ENCODE measurements at regions of chr3 and their contacts with region 1.

Region 1: DNA sequence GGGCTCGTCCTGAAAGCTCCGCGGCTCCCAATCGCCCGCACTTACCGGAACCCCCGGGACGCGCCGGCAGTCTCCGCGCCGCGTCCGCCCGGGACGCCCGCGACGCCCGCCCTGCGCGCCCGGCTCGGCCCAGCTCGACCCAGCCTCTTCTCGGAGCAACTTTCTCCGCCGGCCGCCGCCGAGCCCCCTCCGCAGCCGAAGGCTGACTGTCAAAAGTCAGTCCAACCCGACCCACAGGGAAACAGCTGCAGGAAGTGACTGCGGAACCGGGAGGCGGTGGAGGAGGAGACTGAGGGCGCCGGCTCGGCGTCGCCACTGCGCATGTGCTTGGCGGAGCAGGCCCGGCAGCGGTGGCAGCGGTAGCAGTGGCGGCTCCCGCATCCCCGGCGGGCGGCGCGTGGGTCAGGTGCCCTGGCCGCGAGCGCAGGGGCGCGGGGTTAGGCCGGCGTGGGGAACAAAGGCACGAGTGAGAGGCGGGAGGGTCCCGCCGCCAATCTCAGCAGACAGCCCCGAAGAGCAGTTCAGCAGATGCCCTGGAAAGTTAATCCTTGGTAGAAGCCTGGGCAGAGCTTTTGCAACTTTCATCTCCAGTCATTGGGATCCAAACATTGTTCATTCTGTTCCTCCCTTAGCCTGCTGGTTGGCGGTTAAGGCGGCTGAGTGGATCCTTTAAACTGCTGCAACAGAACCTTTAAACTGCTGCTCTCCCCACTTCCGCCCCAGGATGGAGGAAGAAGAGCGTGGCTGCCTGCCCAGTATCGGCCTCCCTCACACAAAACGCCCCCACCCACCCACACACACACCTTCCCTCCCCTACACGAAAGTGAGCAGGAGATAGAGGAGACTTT is at the start of gene ZMAT3:
- DNase-seq: no peak
- H3K4me3 ChIP-seq: peak within 1 kb of the TSS; percentile 92
- CTCF ChIP-seq: no peak

Region 2: DNA sequence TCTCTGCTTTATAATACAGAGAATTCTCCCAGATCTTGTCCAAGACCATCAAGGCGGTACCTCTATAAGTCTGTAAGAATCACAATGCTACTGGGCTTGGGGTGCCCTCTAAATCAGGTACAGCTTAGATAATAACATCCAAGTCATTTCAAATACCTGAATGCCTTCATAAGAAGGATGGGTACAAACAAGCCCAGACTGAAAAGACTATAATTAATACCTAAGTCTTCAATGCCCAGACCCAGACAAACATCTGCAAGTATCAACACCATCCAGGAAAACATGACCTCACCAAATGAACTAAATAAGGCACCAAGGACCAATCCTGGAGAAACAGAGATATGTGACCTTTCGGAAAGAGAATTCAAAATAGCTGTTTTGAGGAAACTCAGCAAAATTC is 66.1 kb before region 1 on chr3:
- CTCF ChIA-PET with region 1: no interaction called
- POLR2A ChIA-PET with region 1: no interaction called
- DNase-seq: no peak
- H3K4me3 ChIP-seq: no peak overlapping the region
- CTCF ChIP-seq: no peak

Region 3: GRCh38 chr3:179046497-179047353 is 25.0 kb before region 1 on chr3:
- CTCF ChIA-PET with region 1: interaction called, 18 read pairs
- POLR2A ChIA-PET with region 1: no interaction called
- DNase-seq: no peak
- H3K4me3 ChIP-seq: no peak overlapping the region
- CTCF ChIP-seq: no peak

Region 4: DNA sequence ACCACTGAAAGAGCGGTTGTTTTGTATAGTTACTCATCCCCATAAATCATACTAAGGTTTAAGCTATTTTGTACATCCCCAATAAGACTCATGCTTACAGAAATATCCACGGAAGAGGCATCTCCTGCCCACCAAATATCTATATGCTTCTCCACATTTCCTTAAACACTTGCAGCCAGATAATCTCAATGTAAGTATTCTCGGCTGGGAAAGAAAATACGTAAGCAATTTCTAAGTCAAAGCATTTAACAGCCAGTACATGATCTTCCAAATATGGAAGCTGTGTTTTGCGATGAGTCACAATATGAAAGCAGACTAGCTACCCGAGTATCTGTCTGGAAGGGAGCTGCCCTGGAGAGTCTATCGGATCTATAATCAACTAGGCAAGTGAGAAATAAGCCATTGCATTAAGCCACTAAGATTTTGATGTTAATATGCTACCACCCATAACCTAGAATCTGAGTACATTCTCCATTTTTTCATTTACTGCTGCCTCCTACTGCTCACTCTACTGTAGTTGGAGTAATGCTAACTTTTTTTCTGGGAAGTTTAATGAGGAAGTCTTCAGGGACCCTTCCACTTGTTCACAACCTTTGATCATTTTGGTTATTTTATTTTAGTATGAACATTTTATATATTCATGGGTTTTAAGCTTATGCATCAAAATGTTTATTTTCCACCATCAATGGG is 26.8 kb after region 1 on chr3:
- CTCF ChIA-PET with region 1: interaction called, 19 read pairs
- POLR2A ChIA-PET with region 1: interaction called, 5 read pairs
- DNase-seq: no peak
- H3K4me3 ChIP-seq: peak overlapping the region; percentile 36
- CTCF ChIP-seq: no peak